ENCODE measurements at regions of chr22 and their contacts with region 1.

Region 1: GRCh38 chr22:32985899-32986765 is 72.0 kb downstream of the SYN3 start:
- ATAC-seq: peak; percentile 77 to 99 (median 83)
- H3K4me3 ChIP-seq: no peak overlapping the region
- H3K27ac ChIP-seq: peak overlapping the region; percentile 75 to 92
- H3K4me1 ChIP-seq: peaks cover 34 to 40% of the 10 kb centered on the region in 2 donors

Region 2: GRCh38 chr22:32528984-32529982 is 456.8 kb before region 1 on chr22:
- in situ Hi-C with region 1: loop called in 7 of 9 experiments (anchors 10 to 25 kb)
- ATAC-seq: peak; percentile 23 to 80 (median 65)
- H3K4me3 ChIP-seq: no peak overlapping the region
- H3K27ac ChIP-seq: no peak overlapping the region
- H3K4me1 ChIP-seq: peaks cover 28 to 35% of the 10 kb centered on the region in 2 donors

Region 3: DNA sequence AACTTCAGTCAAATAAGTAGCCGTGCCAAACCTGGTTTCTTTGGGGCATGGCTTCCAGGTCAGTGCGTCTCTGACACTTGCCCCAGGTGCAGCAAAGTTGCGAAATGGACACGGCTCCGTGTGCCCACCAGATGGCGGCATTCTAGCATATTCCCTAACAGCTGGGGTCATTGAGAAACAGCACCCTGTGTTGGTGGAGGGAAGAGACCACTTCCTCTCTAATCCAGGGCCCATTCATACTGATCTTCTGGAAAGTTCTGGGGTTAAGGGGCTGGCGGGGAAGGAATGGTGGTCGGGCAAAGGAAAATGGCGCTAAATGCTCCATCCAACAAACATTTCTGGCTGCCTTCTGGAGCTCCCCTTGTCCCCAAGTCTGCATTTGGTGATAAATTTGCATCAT is 325.8 kb before region 1 on chr22:
- in situ Hi-C with region 1: loop called in 1 of 9 experiments (anchors 25 kb)
- ATAC-seq: peak in 7 of 8 experiments; percentile 24 to 61 (median 49)
- H3K4me3 ChIP-seq: no peak overlapping the region
- H3K27ac ChIP-seq: no peak overlapping the region
- H3K4me1 ChIP-seq: peaks cover 0 to 4% of the 10 kb centered on the region in 2 donors

Region 4: DNA sequence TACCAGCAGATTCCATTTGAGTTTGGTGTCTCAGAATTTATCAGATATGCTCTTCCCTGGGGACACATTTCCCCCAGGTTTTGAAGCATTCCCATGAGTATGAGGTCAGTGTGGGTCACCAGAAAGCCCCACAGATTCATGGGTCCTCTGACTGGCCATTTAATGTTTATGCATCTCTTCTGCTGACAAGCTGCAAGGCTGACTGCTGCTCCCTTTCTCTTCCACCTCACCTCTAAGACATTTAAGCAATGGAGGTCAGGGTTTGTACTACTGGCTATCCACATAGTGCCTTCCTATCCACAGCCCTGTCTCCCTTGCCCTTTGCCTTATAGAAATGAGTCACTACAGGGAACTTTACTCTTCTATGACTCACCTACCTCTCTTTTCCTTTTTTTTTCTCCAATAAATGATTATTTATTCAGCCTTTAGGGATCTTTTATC is 290.7 kb before region 1 on chr22:
- in situ Hi-C with region 1: no loop called
- ATAC-seq: peak in 7 of 8 experiments; percentile 60 to 83 (median 73)
- H3K4me3 ChIP-seq: no peak overlapping the region
- H3K27ac ChIP-seq: no peak overlapping the region
- H3K4me1 ChIP-seq: peaks cover 5 to 14% of the 10 kb centered on the region in 2 donors

Region 5: GRCh38 chr22:32796865-32797573 is 189.1 kb before region 1 on chr22:
- in situ Hi-C with region 1: loop called in 1 of 9 experiments (anchors 25 kb)
- ATAC-seq: peak; percentile 35 to 81 (median 60)
- H3K4me3 ChIP-seq: no peak overlapping the region
- H3K27ac ChIP-seq: no peak overlapping the region
- H3K4me1 ChIP-seq: peaks cover 7 to 18% of the 10 kb centered on the region in 2 donors

Region 6: GRCh38 chr22:32836280-32837123 is 149.6 kb before region 1 on chr22:
- in situ Hi-C with region 1: loop called in 2 of 9 experiments (anchors 25 kb)
- ATAC-seq: peak in 1 of 8 experiments; percentile 25
- H3K4me3 ChIP-seq: no peak overlapping the region
- H3K27ac ChIP-seq: no peak overlapping the region
- H3K4me1 ChIP-seq: peaks cover 19 to 22% of the 10 kb centered on the region in 2 donors

Region 7: DNA sequence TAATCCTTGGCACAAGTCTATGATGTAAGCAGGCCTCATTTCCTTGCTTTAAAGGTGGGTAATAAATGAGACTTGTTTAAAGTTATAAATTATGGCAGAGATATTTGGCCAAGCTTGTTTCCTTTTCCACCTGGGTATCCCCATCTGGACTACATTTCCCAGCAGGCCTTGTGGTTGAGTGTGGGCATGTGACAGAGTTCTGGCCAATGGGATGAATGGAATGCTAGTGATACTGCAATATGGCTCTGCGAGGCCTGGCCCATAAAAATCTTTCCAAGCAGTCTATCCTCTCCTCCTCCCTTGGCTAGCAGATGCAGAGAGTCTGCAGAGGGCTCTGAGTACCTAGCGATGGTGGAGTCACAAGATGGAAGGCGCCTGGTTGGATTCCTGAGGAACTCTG is 82.1 kb before region 1 on chr22:
- in situ Hi-C with region 1: no loop called
- ATAC-seq: peak; percentile 52 to 89 (median 70)
- H3K4me3 ChIP-seq: no peak overlapping the region
- H3K27ac ChIP-seq: no peak overlapping the region
- H3K4me1 ChIP-seq: peaks cover 2 to 6% of the 10 kb centered on the region in 2 donors